ENCODE measurements at regions of chr3 and their contacts with region 1.

Region 1: GRCh38 chr3:136752422-136753325 is 496 bp upstream of the STAG1 start:
- DNase-seq: peak; percentile 94
- ATAC-seq: peak; percentile 90
- H3K4me3 ChIP-seq: peak overlapping the region; percentile 63
- H3K27ac ChIP-seq: peak overlapping the region; percentile 91
- H3K4me1 ChIP-seq: peaks cover 16% of the 10 kb centered on the region
- H3K27me3 ChIP-seq: no peaks in the 10 kb centered on the region
- CTCF ChIP-seq: peak in 2 of 3 experiments; percentile 71 to 97; a peak in 4 of 6 replicates
- EP300 ChIP-seq: no peak
- POLR2A ChIP-seq: peak; percentile 89
- RAD21 ChIP-seq: peak; percentile 67

Region 2: DNA sequence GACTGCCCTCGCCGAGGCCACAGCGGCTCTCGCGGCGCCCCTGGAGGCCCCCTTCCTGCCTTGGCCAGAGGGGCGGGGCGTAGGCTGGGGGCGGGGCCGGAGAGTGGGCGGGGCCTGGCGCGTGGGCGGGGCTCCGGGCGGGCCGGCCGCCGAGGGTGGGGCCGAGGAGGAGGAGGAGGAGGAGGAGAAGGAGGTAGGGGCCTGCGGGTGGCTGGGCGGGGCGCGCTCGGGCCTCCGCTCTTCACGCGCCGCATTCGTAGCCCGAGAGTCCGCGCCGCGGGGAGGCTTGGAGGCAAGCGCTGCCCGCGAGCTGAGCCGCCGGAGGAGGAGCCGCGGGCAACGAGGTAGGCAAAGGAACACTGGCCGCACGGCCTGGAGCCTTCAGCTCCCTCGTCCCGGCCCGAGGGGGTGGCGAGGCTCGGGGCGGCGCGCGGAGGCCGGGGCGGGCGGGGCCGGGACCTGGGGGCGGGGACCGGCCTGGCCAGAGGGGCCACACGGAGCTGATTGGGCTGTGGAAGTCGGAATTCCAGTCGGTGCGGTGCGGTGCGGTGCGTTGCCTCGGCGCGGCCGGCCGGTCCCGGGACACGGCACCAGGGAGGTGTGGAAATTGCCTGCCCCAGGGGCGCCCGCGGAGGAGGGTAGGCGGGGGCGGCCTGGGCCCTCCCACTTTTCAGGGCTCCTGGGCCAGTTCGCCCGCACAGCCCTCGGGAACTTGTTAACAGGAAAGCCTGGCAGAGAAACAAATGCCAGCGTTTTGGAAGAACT is 787.0 kb before region 1 on chr3 and contains the start of gene PPP2R3A:
- CTCF ChIA-PET with region 1: no interaction called
- POLR2A ChIA-PET with region 1: no interaction called
- RAD21 ChIA-PET with region 1: no interaction called
- SMC1A ChIA-PET with region 1: no interaction called
- in situ Hi-C with region 1: no loop called
- intact Hi-C with region 1: no loop called
- DNase-seq: no peak
- ATAC-seq: peak; percentile 92
- H3K4me3 ChIP-seq: peak within 1 kb of the TSS; percentile 68
- H3K27ac ChIP-seq: no peak within 1 kb of the TSS
- H3K4me1 ChIP-seq: no peaks in the 10 kb centered on the region; the same call in 1 of the 2 replicates
- H3K27me3 ChIP-seq: peaks cover 0 to 5% of the 10 kb centered on the region in 2 experiments; a peak in 2 of 4 replicates
- CTCF ChIP-seq: no peak
- EP300 ChIP-seq: no peak
- POLR2A ChIP-seq: no peak
- RAD21 ChIP-seq: no peak
- polyA plus RNA-seq, gene PPP2R3A: 0.02 to 0.16 TPM

Region 3: GRCh38 chr3:136250226-136250902 is 502.3 kb before region 1 on chr3 and contains the start of gene PCCB:
- CTCF ChIA-PET with region 1: interaction called, 16 read pairs
- POLR2A ChIA-PET with region 1: interaction called, 3 read pairs
- RAD21 ChIA-PET with region 1: interaction called, 23 read pairs
- SMC1A ChIA-PET with region 1: interaction called, 11 read pairs
- in situ Hi-C with region 1: no loop called
- intact Hi-C with region 1: no loop called
- DNase-seq: peak; percentile 76
- ATAC-seq: peak; percentile 99
- H3K4me3 ChIP-seq: peak within 1 kb of the TSS; percentile 66
- H3K27ac ChIP-seq: peak within 1 kb of the TSS; percentile 71
- H3K4me1 ChIP-seq: peaks cover 15% of the 10 kb centered on the region
- H3K27me3 ChIP-seq: no peaks in the 10 kb centered on the region
- CTCF ChIP-seq: peak; percentile 62 to 75 (median 75)
- EP300 ChIP-seq: 0 out of 4 replicates have a peak, but pooled peaks of 1 of the 2 experiments have one; percentile 25
- POLR2A ChIP-seq: peak; percentile 96
- RAD21 ChIP-seq: peak; percentile 56
- polyA plus RNA-seq, gene PCCB: 67.2 to 73.3 TPM

Region 4: GRCh38 chr3:136390574-136390973 is 362.1 kb before region 1 on chr3:
- CTCF ChIA-PET with region 1: interaction called, 136 read pairs
- POLR2A ChIA-PET with region 1: interaction called, 10 read pairs
- RAD21 ChIA-PET with region 1: interaction called, 119 read pairs
- SMC1A ChIA-PET with region 1: interaction called, 106 read pairs
- in situ Hi-C with region 1: loop called (anchors 5 kb)
- intact Hi-C with region 1: loop called (anchors 2 kb)
- DNase-seq: no peak
- ATAC-seq: no peak
- H3K4me3 ChIP-seq: no peak overlapping the region
- H3K27ac ChIP-seq: no peak overlapping the region
- H3K4me1 ChIP-seq: peaks cover 5% of the 10 kb centered on the region; the same call in 1 of the 2 replicates
- H3K27me3 ChIP-seq: no peaks in the 10 kb centered on the region
- CTCF ChIP-seq: no peak
- EP300 ChIP-seq: no peak
- POLR2A ChIP-seq: no peak
- RAD21 ChIP-seq: no peak

Region 5: DNA sequence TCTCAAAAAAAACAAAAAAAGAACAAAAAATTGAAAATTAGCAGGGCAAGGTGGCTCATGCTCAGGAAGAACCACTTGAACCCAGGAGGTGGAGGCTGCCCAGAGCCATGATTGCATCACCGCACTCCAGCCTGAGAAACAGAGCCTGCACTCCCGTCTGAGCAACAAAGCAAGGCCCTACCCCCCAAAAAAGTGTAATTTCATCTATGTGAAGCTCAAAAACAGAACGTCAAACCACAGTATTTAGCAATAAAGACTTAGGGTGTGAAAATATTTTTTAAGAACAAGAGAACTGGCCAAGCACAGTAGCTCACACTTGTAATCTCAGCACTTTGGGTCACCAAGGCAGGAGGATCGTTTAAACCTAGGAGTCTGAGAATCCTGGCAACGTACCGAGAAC is 38.7 kb before region 1 on chr3:
- CTCF ChIA-PET with region 1: no interaction called
- POLR2A ChIA-PET with region 1: no interaction called
- RAD21 ChIA-PET with region 1: no interaction called
- SMC1A ChIA-PET with region 1: no interaction called
- in situ Hi-C with region 1: no loop called
- intact Hi-C with region 1: no loop called
- DNase-seq: no peak
- ATAC-seq: no peak
- H3K4me3 ChIP-seq: no peak overlapping the region
- H3K27ac ChIP-seq: no peak overlapping the region
- H3K4me1 ChIP-seq: no peaks in the 10 kb centered on the region
- H3K27me3 ChIP-seq: no peaks in the 10 kb centered on the region
- CTCF ChIP-seq: no peak
- EP300 ChIP-seq: no peak
- POLR2A ChIP-seq: no peak
- RAD21 ChIP-seq: no peak

Region 6: GRCh38 chr3:136728918-136729317 is 23.8 kb before region 1 on chr3:
- CTCF ChIA-PET with region 1: interaction called, 7 read pairs
- POLR2A ChIA-PET with region 1: interaction called, 3 read pairs
- RAD21 ChIA-PET with region 1: interaction called, 20 read pairs
- SMC1A ChIA-PET with region 1: interaction called, 15 read pairs
- in situ Hi-C with region 1: no loop called
- intact Hi-C with region 1: no loop called
- DNase-seq: no peak
- ATAC-seq: no peak; the same call in 2 of the 3 replicates
- H3K4me3 ChIP-seq: no peak overlapping the region
- H3K27ac ChIP-seq: no peak overlapping the region
- H3K4me1 ChIP-seq: peaks cover 30% of the 10 kb centered on the region
- H3K27me3 ChIP-seq: no peaks in the 10 kb centered on the region
- CTCF ChIP-seq: no peak
- EP300 ChIP-seq: no peak
- POLR2A ChIP-seq: no peak
- RAD21 ChIP-seq: no peak

Region 7: GRCh38 chr3:136861890-136862616 is 109.4 kb after region 1 on chr3 and contains the start of gene NCK1:
- CTCF ChIA-PET with region 1: interaction called, 51 read pairs
- POLR2A ChIA-PET with region 1: interaction called, 41 read pairs
- RAD21 ChIA-PET with region 1: interaction called, 66 read pairs
- SMC1A ChIA-PET with region 1: interaction called, 13 read pairs
- in situ Hi-C with region 1: no loop called
- intact Hi-C with region 1: loop called (anchors 2 kb)
- DNase-seq: peak; percentile 90
- ATAC-seq: peak; percentile 95
- H3K4me3 ChIP-seq: peak within 1 kb of the TSS; percentile 87
- H3K27ac ChIP-seq: peak within 1 kb of the TSS; percentile 92
- H3K4me1 ChIP-seq: 0 out of 2 replicates have a peak, but pooled peaks cover 2% of the 10 kb centered on the region
- H3K27me3 ChIP-seq: no peaks in the 10 kb centered on the region
- CTCF ChIP-seq: no peak
- EP300 ChIP-seq: peak in 1 of 2 experiments; percentile 13; a peak in 1 of 4 replicates
- POLR2A ChIP-seq: peak; percentile 98
- RAD21 ChIP-seq: no peak
- polyA plus RNA-seq, gene NCK1: 18.5 to 20.4 TPM

Region 8: GRCh38 chr3:137013955-137014688 is 261.4 kb after region 1 on chr3:
- CTCF ChIA-PET with region 1: interaction called, 229 read pairs
- POLR2A ChIA-PET with region 1: interaction called, 11 read pairs
- RAD21 ChIA-PET with region 1: interaction called, 200 read pairs
- SMC1A ChIA-PET with region 1: interaction called, 161 read pairs
- in situ Hi-C with region 1: loop called (anchors 5 kb)
- intact Hi-C with region 1: loop called (anchors 1 kb)
- DNase-seq: peak; percentile 51
- ATAC-seq: peak; percentile 93
- H3K4me3 ChIP-seq: peak overlapping the region; percentile 65
- H3K27ac ChIP-seq: peak overlapping the region; percentile 48
- H3K4me1 ChIP-seq: 0 out of 2 replicates have a peak, but pooled peaks cover 4% of the 10 kb centered on the region
- H3K27me3 ChIP-seq: no peaks in the 10 kb centered on the region
- CTCF ChIP-seq: peak; percentile 78 to 92 (median 78)
- EP300 ChIP-seq: 0 out of 4 replicates have a peak, but pooled peaks of 1 of the 2 experiments have one; percentile 9
- POLR2A ChIP-seq: no peak
- RAD21 ChIP-seq: peak; percentile 99

Region 9: DNA sequence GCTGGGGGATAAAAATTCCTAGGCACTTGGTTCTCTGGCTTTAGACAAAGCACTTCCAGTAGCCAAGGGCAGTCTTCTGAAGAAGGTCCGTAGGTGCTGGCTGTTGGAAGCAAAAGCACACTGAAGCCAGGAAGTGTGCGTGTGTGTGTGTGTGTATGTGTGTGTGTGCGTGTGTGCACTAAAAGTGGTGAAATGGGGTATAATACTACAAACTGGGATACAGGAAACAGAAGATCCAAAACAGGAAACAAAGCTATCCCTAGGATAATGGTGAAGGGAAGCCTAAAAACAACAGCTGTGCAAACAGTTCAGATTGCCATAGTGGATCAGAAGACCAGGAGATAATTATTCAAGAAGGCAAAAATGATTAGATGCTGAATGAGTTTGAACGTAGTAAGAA is 308.5 kb after region 1 on chr3:
- CTCF ChIA-PET with region 1: no interaction called
- POLR2A ChIA-PET with region 1: no interaction called
- RAD21 ChIA-PET with region 1: no interaction called
- SMC1A ChIA-PET with region 1: no interaction called
- in situ Hi-C with region 1: no loop called
- intact Hi-C with region 1: no loop called
- DNase-seq: no peak
- ATAC-seq: no peak
- H3K4me3 ChIP-seq: no peak overlapping the region
- H3K27ac ChIP-seq: peak overlapping the region; percentile 4; the same call in 1 of the 2 replicates
- H3K4me1 ChIP-seq: peaks cover 32% of the 10 kb centered on the region
- H3K27me3 ChIP-seq: no peaks in the 10 kb centered on the region
- CTCF ChIP-seq: no peak
- EP300 ChIP-seq: no peak
- POLR2A ChIP-seq: no peak
- RAD21 ChIP-seq: no peak